ENCODE measurements at regions of chr7 and their contacts with region 1.

Region 1: GRCh38 chr7:43135129-43135528 is 22.7 kb downstream of the HECW1 start:
- DNase-seq: peak; percentile 63
- H3K4me3 Mint-ChIP-seq: no peak overlapping the region
- H3K27ac Mint-ChIP-seq: no peak overlapping the region
- H3K4me1 Mint-ChIP-seq: peaks cover 6% of the 10 kb centered on the region
- H3K27me3 Mint-ChIP-seq: no peaks in the 10 kb centered on the region
- CTCF ChIP-seq: no peak

Region 2: GRCh38 chr7:43108255-43109011 is 26.7 kb before region 1 on chr7:
- CTCF ChIA-PET with region 1: interaction called, 11 read pairs
- POLR2A ChIA-PET with region 1: interaction called, 3 read pairs
- intact Hi-C with region 1: no loop called
- DNase-seq: peak; percentile 78
- H3K4me3 Mint-ChIP-seq: no peak overlapping the region
- H3K27ac Mint-ChIP-seq: no peak overlapping the region
- H3K4me1 Mint-ChIP-seq: no peaks in the 10 kb centered on the region
- H3K27me3 Mint-ChIP-seq: peaks cover 30% of the 10 kb centered on the region
- CTCF ChIP-seq: peak; percentile 91

Region 3: GRCh38 chr7:43302211-43302711 is 167.1 kb after region 1 on chr7:
- CTCF ChIA-PET with region 1: no interaction called
- POLR2A ChIA-PET with region 1: no interaction called
- intact Hi-C with region 1: no loop called
- DNase-seq: peak; percentile 91
- H3K4me3 Mint-ChIP-seq: no peak overlapping the region
- H3K27ac Mint-ChIP-seq: no peak overlapping the region
- H3K4me1 Mint-ChIP-seq: peaks cover 21% of the 10 kb centered on the region
- H3K27me3 Mint-ChIP-seq: no peaks in the 10 kb centered on the region
- CTCF ChIP-seq: no peak

Measured in MCF 10A (cell line).